Stomach (tissue), 19 donors: ENCODE measurements at regions of chr1 and their contacts with region 1.

Region 1: GRCh38 chr1:117051224-117052064 is 8.7 kb upstream of the TTF2 start:
- DNase-seq: peak; percentile 56 to 71
- H3K4me3 ChIP-seq: peak overlapping the region; percentile 9 to 24 (median 19)
- H3K27ac ChIP-seq: peak overlapping the region in 4 of 5 donors; percentile 20 to 74 (median 60)
- H3K4me1 ChIP-seq: peaks cover 0 to 19% (median 6%) of the 10 kb centered on the region in 4 donors
- H3K27me3 ChIP-seq: no peaks in the 10 kb centered on the region
- CTCF ChIP-seq: no peak
- EP300 ChIP-seq: no peak
- POLR2A ChIP-seq: no peak

Region 2: GRCh38 chr1:116737020-116737854 is 314.2 kb before region 1 on chr1:
- intact Hi-C with region 1: loop called (anchors 5 kb)
- DNase-seq: peak; percentile 59 to 83
- H3K4me3 ChIP-seq: no peak overlapping the region
- H3K27ac ChIP-seq: peak overlapping the region in 2 of 5 donors; percentile 17 to 43
- H3K4me1 ChIP-seq: no peaks in the 10 kb centered on the region
- H3K27me3 ChIP-seq: no peaks in the 10 kb centered on the region
- CTCF ChIP-seq: peak in 5 of 7 experiments; percentile 47 to 73 (median 67)
- EP300 ChIP-seq: no peak
- POLR2A ChIP-seq: no peak

Region 3: DNA sequence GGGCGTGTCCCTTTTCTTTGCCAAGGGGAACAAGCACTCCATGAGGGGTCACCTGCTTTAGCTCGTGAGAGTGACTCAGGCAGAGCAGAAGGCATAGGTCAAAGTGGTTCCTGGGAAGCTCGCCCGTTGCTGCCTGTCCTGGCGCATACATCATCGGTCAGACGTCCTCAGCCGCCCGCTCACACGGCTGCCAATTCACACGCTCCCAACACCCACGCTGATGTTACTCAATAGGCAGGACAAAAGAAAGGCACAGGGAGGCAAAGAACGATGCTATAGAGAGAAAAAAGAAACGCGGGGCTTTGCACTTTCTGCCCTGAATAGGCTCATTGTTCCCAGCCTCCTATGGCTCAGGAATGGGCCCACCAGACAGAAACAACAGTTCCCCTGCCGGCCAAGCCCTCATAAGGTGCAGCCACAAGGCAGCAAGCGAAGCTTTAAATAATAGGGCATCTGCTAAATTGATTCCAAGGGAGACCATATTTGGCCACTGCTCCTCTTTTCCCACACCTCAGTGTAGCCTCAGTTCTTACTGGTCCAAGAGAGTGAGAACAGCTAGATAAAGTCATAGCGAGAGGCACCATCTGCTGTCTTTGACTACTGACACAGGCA is 120.6 kb after region 1 on chr1:
- intact Hi-C with region 1: no loop called
- DNase-seq: peak; percentile 44 to 83
- H3K4me3 ChIP-seq: no peak overlapping the region
- H3K27ac ChIP-seq: peak overlapping the region in 1 of 5 donors; percentile 8
- H3K4me1 ChIP-seq: no peaks in the 10 kb centered on the region
- H3K27me3 ChIP-seq: no peaks in the 10 kb centered on the region
- CTCF ChIP-seq: no peak
- EP300 ChIP-seq: no peak
- POLR2A ChIP-seq: no peak

Region 4: DNA sequence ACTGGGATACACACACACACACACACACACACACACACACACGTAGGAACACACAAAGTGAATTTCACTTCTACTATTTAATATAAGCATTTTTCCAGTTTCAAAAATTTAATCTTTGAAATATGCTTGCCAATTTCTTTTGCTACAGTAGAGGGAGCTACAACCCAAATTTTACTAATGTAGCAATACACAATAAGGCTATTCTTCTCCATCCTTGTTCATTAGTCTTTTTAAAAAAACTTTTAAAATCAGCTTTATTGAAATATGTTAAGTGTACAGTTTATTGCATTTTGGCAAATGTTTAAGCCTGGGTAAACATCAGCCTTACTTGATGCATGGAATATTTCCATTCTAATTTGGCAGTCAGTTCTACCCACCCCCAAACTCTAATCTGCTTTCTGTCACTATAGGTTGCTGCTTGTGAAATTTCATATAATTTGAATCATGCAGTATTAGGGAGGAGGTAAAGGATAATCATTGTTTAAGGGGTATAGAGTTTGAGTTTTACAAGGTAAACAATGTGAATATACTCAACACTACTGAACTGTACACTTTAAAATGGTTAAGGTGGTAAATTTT is 461.4 kb after region 1 on chr1:
- intact Hi-C with region 1: no loop called
- DNase-seq: peak in 1 of 2 donors; percentile 56
- H3K4me3 ChIP-seq: no peak overlapping the region
- H3K27ac ChIP-seq: no peak overlapping the region
- H3K4me1 ChIP-seq: no peaks in the 10 kb centered on the region
- H3K27me3 ChIP-seq: no peaks in the 10 kb centered on the region
- CTCF ChIP-seq: peak in 4 of 7 experiments; percentile 33 to 49 (median 42)
- EP300 ChIP-seq: no peak
- POLR2A ChIP-seq: no peak